K562 (cell line): ENCODE measurements at regions of chr6 and their contacts with region 1.

Region 1: GRCh38 chr6:118709859-118710350 is 58.5 kb upstream of the CEP85L start:
- DNase-seq: peak; percentile 39 to 92 (median 58)
- ATAC-seq: peak; percentile 87
- H3K4me3 ChIP-seq: peak overlapping the region; percentile 54
- H3K27ac ChIP-seq: peak overlapping the region; percentile 98
- H3K4me1 ChIP-seq: peaks cover 12 to 27% of the 10 kb centered on the region in 2 experiments
- H3K27me3 ChIP-seq: no peaks in the 10 kb centered on the region
- CTCF ChIP-seq: no peak
- EP300 ChIP-seq: peak; percentile 25; the same call in 1 of the 2 replicates
- POLR2A ChIP-seq: peak; percentile 85
- RAD21 ChIP-seq: no peak

Region 2: GRCh38 chr6:118476551-118476950 is 233.4 kb before region 1 on chr6:
- CTCF ChIA-PET with region 1: no interaction called
- POLR2A ChIA-PET with region 1: no interaction called
- in situ Hi-C with region 1: no loop called
- intact Hi-C with region 1: no loop called
- DNase-seq: no peak
- ATAC-seq: no peak
- H3K4me3 ChIP-seq: no peak overlapping the region
- H3K27ac ChIP-seq: no peak overlapping the region
- H3K4me1 ChIP-seq: no peaks in the 10 kb centered on the region
- H3K27me3 ChIP-seq: no peaks in the 10 kb centered on the region
- CTCF ChIP-seq: no peak
- EP300 ChIP-seq: no peak
- POLR2A ChIP-seq: no peak
- RAD21 ChIP-seq: no peak

Region 3: DNA sequence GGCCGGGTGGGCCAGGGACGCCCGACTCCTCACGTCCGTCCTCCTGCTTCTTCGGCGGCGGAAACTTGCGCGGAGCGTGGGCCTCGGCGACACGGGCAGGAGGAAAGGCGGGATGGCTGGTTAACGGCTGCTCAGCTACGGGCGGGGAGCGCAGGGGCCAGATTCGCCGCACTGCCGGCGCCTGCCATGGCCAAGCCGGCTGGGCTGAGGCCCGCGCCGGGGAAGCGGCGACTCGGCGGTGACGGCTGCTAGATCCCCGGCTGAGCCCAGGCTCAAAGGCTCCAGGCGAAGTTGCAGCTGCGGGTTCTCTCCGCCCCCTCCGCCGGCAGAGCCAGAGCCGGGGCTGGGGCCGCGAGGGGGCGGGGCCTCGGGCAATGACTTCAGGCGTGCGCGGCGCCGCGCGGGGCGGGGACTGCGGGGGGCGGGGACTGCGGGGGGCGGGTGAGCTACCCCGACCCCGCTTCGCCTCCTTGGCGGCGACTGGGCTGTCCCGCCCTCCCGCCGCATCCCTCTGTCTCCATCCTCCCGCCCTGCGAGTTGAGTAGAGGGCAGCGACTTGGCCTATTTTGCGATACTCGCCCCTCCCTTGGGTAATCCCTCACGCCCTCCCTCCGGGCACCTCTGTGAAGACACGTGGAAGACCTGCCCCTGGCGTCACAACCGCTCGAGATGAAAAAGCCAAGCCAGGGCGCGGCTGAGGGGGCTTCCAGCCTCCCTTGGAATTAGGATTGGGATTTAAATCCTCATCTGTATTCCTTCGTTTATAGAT is 58.4 kb before region 1 on chr6 and contains the start of gene CEP85L:
- CTCF ChIA-PET with region 1: no interaction called
- POLR2A ChIA-PET with region 1: no interaction called
- in situ Hi-C with region 1: no loop called
- intact Hi-C with region 1: loop called (anchors 1 kb)
- DNase-seq: peak; percentile 93 to 96 (median 96)
- ATAC-seq: peak; percentile 96
- H3K4me3 ChIP-seq: peak within 1 kb of the TSS; percentile 80
- H3K27ac ChIP-seq: peak within 1 kb of the TSS; percentile 92
- H3K4me1 ChIP-seq: peaks cover 14 to 17% of the 10 kb centered on the region in 2 experiments; a peak in 4 of 5 replicates
- H3K27me3 ChIP-seq: no peaks in the 10 kb centered on the region
- CTCF ChIP-seq: no peak
- EP300 ChIP-seq: no peak
- POLR2A ChIP-seq: peak; percentile 74
- RAD21 ChIP-seq: peak; percentile 2 to 12; a peak in 1 of 4 replicates
- polyA plus RNA-seq, gene CEP85L: 4.5 to 7.0 TPM

Region 4: GRCh38 chr6:118685823-118686449 is 24.0 kb before region 1 on chr6:
- CTCF ChIA-PET with region 1: no interaction called
- POLR2A ChIA-PET with region 1: interaction called, 16 read pairs
- in situ Hi-C with region 1: no loop called
- intact Hi-C with region 1: loop called (anchors 2 kb)
- DNase-seq: no peak
- ATAC-seq: peak; percentile 38; the same call in 2 of the 3 replicates
- H3K4me3 ChIP-seq: no peak overlapping the region
- H3K27ac ChIP-seq: no peak overlapping the region
- H3K4me1 ChIP-seq: peaks cover 4 to 5% of the 10 kb centered on the region in 2 experiments; a peak in 4 of 5 replicates
- H3K27me3 ChIP-seq: no peaks in the 10 kb centered on the region
- CTCF ChIP-seq: no peak
- EP300 ChIP-seq: no peak
- POLR2A ChIP-seq: no peak
- RAD21 ChIP-seq: no peak

Region 5: DNA sequence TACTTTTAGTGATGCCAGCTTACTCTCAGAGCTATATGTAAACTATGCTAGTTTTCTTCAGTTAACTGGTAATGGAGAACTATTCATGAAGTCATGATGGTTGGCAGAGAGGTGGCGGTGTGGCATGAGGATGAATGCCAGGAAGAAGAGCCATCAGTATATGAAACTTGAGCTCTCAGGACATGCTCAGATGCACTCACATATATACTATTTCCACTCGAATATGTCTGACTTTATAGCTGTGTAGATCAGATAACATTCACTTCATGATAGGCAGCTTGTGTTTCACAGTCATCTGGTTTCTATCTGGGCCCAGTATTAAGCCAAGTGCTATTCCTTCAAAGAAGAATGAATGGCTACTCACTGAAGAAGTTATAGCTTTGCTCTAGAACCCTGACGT is 12.4 kb before region 1 on chr6:
- CTCF ChIA-PET with region 1: no interaction called
- POLR2A ChIA-PET with region 1: interaction called, 29 read pairs
- in situ Hi-C with region 1: no loop called
- intact Hi-C with region 1: no loop called
- DNase-seq: no peak
- ATAC-seq: peak; percentile 65
- H3K4me3 ChIP-seq: no peak overlapping the region
- H3K27ac ChIP-seq: no peak overlapping the region
- H3K4me1 ChIP-seq: peaks cover 0 to 15% of the 10 kb centered on the region in 2 experiments; a peak in 3 of 5 replicates
- H3K27me3 ChIP-seq: no peaks in the 10 kb centered on the region
- CTCF ChIP-seq: no peak
- EP300 ChIP-seq: no peak
- POLR2A ChIP-seq: no peak
- RAD21 ChIP-seq: no peak

Region 6: GRCh38 chr6:118776607-118777549 is 67.0 kb after region 1 on chr6:
- CTCF ChIA-PET with region 1: no interaction called
- POLR2A ChIA-PET with region 1: interaction called, 3 read pairs
- in situ Hi-C with region 1: no loop called
- intact Hi-C with region 1: loop called (anchors 2 kb)
- DNase-seq: peak; percentile 60 to 74 (median 62)
- ATAC-seq: peak; percentile 87
- H3K4me3 ChIP-seq: no peak overlapping the region
- H3K27ac ChIP-seq: no peak overlapping the region
- H3K4me1 ChIP-seq: peaks cover 0 to 3% of the 10 kb centered on the region in 2 experiments; a peak in 1 of 5 replicates
- H3K27me3 ChIP-seq: peaks cover 13 to 16% of the 10 kb centered on the region in 2 experiments; a peak in 4 of 5 replicates
- CTCF ChIP-seq: peak; percentile 64 to 85 (median 67); a peak in 5 of 6 replicates
- EP300 ChIP-seq: no peak
- POLR2A ChIP-seq: no peak
- RAD21 ChIP-seq: peak; percentile 82 to 88

Region 7: GRCh38 chr6:118940748-118941147 is 230.8 kb after region 1 on chr6:
- CTCF ChIA-PET with region 1: no interaction called
- POLR2A ChIA-PET with region 1: no interaction called
- in situ Hi-C with region 1: no loop called
- intact Hi-C with region 1: no loop called
- DNase-seq: no peak
- ATAC-seq: no peak
- H3K4me3 ChIP-seq: no peak overlapping the region
- H3K27ac ChIP-seq: no peak overlapping the region
- H3K4me1 ChIP-seq: peaks cover 0 to 4% of the 10 kb centered on the region in 2 experiments; a peak in 1 of 5 replicates
- H3K27me3 ChIP-seq: no peaks in the 10 kb centered on the region
- CTCF ChIP-seq: no peak
- EP300 ChIP-seq: no peak
- POLR2A ChIP-seq: no peak
- RAD21 ChIP-seq: no peak